ENCODE measurements at regions of chr15 and their contacts with region 1.

Region 1: GRCh38 chr15:84929744-84930371 is 45.4 kb downstream of the SLC28A1 start:
- DNase-seq: no peak
- H3K4me3 ChIP-seq: no peak overlapping the region
- H3K27ac ChIP-seq: no peak overlapping the region
- H3K4me1 ChIP-seq: peaks cover 8% of the 10 kb centered on the region
- H3K27me3 ChIP-seq: no peaks in the 10 kb centered on the region
- CTCF ChIP-seq: no peak

Region 2: DNA sequence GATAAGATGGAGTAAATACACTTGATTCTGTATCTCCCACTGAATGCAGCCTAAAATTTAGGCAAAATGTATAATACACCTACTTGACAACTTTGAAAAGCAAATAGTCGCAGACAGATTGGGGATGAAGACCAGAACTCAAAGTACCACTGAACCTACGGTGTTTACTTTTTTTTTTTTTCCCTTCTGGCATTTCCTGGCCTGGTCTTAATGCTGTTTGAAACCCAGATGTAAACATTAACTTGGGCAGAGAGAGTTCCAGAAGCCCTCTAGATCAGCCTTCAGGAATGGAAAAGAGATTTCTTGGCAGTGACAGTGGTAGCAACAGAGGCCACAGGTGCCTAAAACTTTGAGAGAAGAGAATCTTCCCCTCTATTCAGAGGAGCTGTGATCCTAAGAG is 84.9 kb before region 1 on chr15:
- intact Hi-C with region 1: loop called (anchors 5 kb)
- DNase-seq: no peak
- H3K4me3 ChIP-seq: no peak overlapping the region
- H3K27ac ChIP-seq: peak overlapping the region; percentile 95
- H3K4me1 ChIP-seq: peaks cover 60% of the 10 kb centered on the region
- H3K27me3 ChIP-seq: no peaks in the 10 kb centered on the region
- CTCF ChIP-seq: no peak

Region 3: GRCh38 chr15:85312486-85312885 is 382.6 kb after region 1 on chr15:
- intact Hi-C with region 1: no loop called
- DNase-seq: no peak
- H3K4me3 ChIP-seq: no peak overlapping the region
- H3K27ac ChIP-seq: no peak overlapping the region
- H3K4me1 ChIP-seq: no peaks in the 10 kb centered on the region
- H3K27me3 ChIP-seq: no peaks in the 10 kb centered on the region
- CTCF ChIP-seq: no peak